Common myeloid progenitor, CD34-positive (primary cell): ENCODE measurements at regions of chr11 and their contacts with region 1.

Region 1: GRCh38 chr11:119284344-119285157 is 32.4 kb downstream of the MCAM start:
- DNase-seq: peak; percentile 61 to 75 (median 75)
- H3K4me3 ChIP-seq: no peak overlapping the region
- H3K27ac ChIP-seq: no peak overlapping the region
- H3K4me1 ChIP-seq: peaks cover 0 to 4% (median 1%) of the 10 kb centered on the region in 4 experiments
- H3K27me3 ChIP-seq: no peaks in the 10 kb centered on the region

Region 2: DNA sequence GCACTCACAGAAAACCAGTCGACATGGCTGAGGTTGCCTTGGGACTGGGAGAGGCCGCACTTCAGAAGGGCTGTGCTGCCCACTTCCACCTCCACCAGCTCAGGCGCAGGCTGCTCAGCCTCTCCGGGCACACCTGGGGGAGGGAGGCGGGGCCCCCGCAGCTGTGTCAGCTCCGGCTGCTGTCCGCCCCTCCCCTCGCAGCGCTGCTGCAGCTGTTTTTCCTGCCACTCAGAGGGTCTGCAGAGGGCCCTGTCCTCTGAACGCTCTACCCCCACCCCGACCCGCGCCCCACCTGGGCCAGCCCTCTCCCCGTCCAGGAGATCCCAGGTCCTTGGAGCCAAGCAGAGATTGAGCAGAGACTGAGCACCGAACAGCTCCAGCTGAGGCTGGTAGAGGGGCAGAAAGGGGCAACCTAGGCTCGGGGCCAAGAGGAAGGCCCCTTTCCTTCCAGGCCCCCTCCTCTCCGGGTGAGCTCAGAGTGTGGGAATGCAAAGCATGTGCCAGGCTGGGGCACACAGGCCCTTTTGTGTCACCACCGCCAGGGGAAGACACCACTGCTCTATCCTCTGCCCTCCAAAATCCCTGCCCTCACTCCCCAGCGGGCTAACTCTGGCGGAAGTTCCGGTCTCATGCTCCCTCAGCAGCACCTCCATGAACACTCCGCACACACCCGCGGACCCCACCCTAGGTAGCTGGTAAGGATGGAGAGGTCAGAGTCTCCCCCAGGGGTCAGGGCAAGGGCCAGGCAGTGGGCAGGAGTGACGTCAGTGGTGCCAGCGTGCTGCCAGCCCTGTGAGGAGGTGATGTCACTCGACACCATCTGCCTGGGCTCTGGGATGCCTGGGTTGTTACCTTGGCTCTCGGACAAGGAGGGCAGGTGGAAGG is 30.8 kb after region 1 on chr11:
- CTCF ChIA-PET with region 1: interaction called, 15 read pairs
- POLR2A ChIA-PET with region 1: no interaction called
- DNase-seq: peak in 2 of 3 donors; percentile 60 to 70
- H3K4me3 ChIP-seq: peak overlapping the region in 6 of 7 experiments; percentile 9 to 66 (median 52)
- H3K27ac ChIP-seq: no peak overlapping the region
- H3K4me1 ChIP-seq: peaks cover 0 to 32% (median 27%) of the 10 kb centered on the region in 4 experiments
- H3K27me3 ChIP-seq: peaks cover 0 to 66% (median 42%) of the 10 kb centered on the region in 5 experiments

Region 3: DNA sequence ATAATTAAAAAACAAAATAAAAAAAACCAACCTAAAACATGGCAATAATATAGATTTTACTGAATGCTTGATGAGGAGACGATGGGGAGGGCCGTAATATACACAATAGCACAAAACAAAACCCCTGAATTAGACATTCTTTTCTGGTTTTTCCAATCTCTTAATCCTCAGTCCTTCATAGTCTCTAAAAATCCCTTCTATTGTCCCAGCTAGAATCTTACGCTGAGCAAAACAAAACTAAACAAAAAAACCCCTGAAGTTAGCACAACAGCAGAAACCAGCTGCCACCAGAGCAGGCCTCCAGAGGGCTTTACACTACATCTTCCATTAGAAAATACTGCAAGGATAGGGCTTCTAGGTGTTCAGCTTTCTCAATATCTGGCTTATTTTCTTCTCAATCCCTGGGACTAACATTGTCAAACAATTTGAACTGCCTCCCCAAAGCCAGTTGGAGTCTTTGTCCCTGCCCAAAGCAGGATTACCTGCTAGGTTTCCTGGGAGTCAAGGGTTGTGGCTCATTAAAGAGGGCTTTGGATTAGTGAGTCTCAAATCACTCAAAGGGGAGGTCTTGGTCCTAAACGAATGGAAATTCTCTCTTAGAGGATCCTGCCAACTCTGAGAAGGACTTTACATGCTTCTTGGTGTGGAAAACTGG is 47.7 kb after region 1 on chr11:
- CTCF ChIA-PET with region 1: no interaction called
- POLR2A ChIA-PET with region 1: no interaction called
- DNase-seq: no peak
- H3K4me3 ChIP-seq: no peak overlapping the region
- H3K27ac ChIP-seq: no peak overlapping the region
- H3K4me1 ChIP-seq: peaks cover 0 to 20% (median 15%) of the 10 kb centered on the region in 4 experiments
- H3K27me3 ChIP-seq: peaks cover 0 to 2% (median 0%) of the 10 kb centered on the region in 5 experiments